Dorsolateral prefrontal cortex (tissue), 120 donors: ENCODE measurements at regions of chr22 and their contacts with region 1.

Region 1: GRCh38 chr22:24189249-24190158 is 8.2 kb downstream of the SUSD2 start:
- DNase-seq: peak in 7 of 10 donors; percentile 36 to 64 (median 47)
- H3K4me3 ChIP-seq: no peak overlapping the region
- H3K27ac ChIP-seq: peak overlapping the region in 4 of 59 donors; percentile 3 to 46 (median 36)
- H3K27me3 ChIP-seq: no peaks in the 10 kb centered on the region
- CTCF ChIP-seq: peak; percentile 15 to 85 (median 72)

Region 2: GRCh38 chr22:24117942-24118341 is 71.6 kb before region 1 on chr22:
- intact Hi-C with region 1: no loop called
- DNase-seq: no peak
- H3K4me3 ChIP-seq: no peak overlapping the region
- H3K27ac ChIP-seq: peak overlapping the region in 2 of 59 donors; percentile 84 to 93
- H3K27me3 ChIP-seq: no peaks in the 10 kb centered on the region
- CTCF ChIP-seq: no peak

Region 3: DNA sequence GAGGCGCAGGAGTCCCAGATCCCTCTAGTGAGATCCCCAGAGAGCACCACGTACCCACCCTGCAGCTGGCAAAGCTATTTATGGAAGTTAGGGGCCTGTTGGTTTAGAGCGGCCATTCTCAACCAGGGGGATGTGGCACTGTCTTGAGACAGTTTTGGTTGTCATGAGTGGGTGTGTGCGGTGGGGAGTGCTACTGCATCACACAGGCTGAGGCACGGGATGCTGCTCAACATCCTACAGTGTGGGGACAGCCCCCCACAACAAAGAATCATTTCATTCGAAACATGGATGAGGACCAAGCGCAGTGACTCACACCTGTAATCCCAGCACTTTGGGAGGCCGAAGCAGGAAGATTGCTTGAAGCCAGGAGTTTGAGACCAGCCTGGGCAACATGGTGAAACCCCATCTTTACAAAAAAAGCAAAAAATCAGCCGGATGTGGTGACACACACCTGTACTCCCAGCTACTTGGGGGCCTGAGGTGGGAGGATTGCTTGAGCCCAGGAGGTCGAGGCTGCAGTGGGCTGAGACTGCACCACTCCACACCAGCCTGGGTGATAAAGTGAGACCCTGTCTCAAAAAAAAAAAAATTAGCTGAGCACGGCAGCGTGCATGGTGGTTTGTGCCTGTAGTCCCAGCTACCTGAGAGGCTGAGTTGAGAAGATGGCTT is 27.2 kb after region 1 on chr22:
- intact Hi-C with region 1: no loop called
- DNase-seq: no peak
- H3K4me3 ChIP-seq: no peak overlapping the region
- H3K27ac ChIP-seq: no peak overlapping the region
- H3K27me3 ChIP-seq: no peaks in the 10 kb centered on the region
- CTCF ChIP-seq: no peak

Region 4: DNA sequence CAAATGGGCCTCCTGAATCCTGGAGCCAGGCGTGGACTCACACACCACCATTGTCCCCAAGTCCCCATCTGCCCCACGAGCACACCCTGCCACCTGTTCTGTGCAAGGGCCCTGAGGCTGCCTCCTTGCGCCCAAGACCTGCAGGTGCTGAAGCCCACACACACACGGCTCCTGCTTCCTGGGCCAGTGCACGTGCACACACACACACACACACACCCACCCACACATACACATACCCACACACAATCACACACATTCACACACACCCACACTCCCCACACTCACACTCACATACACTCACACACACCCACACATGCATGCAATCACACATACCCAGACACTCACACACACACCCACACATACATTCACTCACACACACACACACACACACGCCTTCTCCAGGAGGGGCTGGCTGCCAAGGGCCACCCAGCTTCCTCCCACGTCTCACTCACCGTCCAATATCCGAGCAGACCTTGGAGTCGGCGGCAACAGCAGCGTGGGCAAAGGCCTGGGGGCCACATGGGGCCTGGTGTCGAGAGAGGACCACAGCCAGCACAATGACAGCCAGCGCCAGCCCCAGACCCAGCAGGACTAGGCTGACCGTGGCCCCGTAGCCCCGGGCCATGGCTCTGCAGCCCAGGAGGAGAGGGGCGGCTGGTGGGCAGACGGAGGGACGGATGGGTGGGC is 54.7 kb after region 1 on chr22:
- intact Hi-C with region 1: loop called (anchors 10 kb)
- DNase-seq: peak in 1 of 10 donors; percentile 7
- H3K4me3 ChIP-seq: peak overlapping the region in 36 of 59 donors; percentile 3 to 56 (median 39)
- H3K27ac ChIP-seq: peak overlapping the region in 26 of 59 donors; percentile 17 to 88 (median 54)
- H3K27me3 ChIP-seq: no peaks in the 10 kb centered on the region
- CTCF ChIP-seq: no peak